Motor neuron (in vitro differentiated cells): ENCODE measurements at regions of chr6 and their contacts with region 1.

Region 1: GRCh38 chr6:165884813-165885765 is 222.0 kb upstream of the PDE10A start:
- ATAC-seq: peak; percentile 91 to 100 (median 95)
- H3K4me3 ChIP-seq: no peak overlapping the region
- H3K27ac ChIP-seq: no peak overlapping the region
- H3K4me1 ChIP-seq: peaks cover 0 to 2% of the 10 kb centered on the region in 2 donors

Region 2: DNA sequence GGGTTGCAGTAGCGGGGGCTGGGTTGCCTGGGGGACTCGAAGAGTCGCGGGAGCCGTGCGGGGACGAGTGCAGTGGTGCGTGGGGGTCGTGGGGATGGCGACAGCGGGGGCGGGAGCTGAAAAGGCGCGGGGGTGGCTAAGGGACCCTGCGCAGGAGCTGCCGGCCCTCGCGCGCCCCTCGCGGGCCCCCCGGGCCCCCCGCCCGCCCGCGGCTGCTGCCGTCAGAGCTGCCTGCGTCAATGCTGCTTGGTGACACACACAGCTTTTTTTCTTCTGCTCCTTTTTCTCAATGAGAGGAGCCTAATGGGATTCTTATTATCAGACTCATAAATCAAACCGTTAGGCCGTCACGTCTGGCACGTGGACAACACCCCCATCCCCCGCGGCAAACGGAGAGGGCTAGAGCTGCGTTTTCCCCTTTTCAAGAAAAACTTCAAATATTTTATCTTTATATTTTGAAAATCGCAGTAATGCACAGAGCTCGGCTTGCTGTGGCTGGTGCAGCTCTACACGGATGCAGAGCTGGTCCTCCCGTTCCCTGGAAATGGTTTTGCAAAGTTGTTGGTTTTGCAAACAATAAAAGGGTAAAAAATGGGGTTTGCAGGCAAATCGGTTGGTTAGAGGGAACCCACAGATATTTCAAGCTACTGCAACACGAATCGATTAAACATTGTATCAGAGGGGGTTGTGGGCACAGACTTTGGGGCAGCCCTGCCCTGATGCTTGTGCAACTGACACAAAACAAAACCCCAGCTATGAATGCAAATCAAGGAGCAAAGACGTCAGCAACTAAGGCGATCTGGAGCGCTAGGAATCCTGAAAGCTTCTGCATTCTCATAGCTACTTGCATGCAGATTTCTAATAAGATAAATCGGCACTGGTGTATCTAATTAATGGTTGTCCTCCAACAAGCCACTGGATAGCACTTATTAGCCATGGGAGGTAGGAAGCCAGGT is 121.1 kb after region 1 on chr6:
- in situ Hi-C with region 1: no loop called
- ATAC-seq: peak in 7 of 8 experiments; percentile 56 to 71 (median 66)
- H3K4me3 ChIP-seq: peak overlapping the region; percentile 28 to 36 (median 31)
- H3K27ac ChIP-seq: peak overlapping the region; percentile 55 to 83
- H3K4me1 ChIP-seq: peaks cover 21 to 39% of the 10 kb centered on the region in 2 donors

Region 3: GRCh38 chr6:166097915-166098522 is 212.9 kb after region 1 on chr6:
- in situ Hi-C with region 1: loop called (anchors 10 kb)
- ATAC-seq: peak; percentile 51 to 100 (median 94)
- H3K4me3 ChIP-seq: peak overlapping the region in 4 of 5 donors; percentile 11 to 40 (median 24)
- H3K27ac ChIP-seq: no peak overlapping the region
- H3K4me1 ChIP-seq: no peaks in the 10 kb centered on the region

Region 4: GRCh38 chr6:166106076-166106686 is 221.1 kb after region 1 on chr6:
- in situ Hi-C with region 1: loop called in 6 of 9 experiments (anchors 10 kb)
- ATAC-seq: peak; percentile 72 to 92 (median 82)
- H3K4me3 ChIP-seq: no peak overlapping the region
- H3K27ac ChIP-seq: no peak overlapping the region
- H3K4me1 ChIP-seq: no peaks in the 10 kb centered on the region

Region 5: DNA sequence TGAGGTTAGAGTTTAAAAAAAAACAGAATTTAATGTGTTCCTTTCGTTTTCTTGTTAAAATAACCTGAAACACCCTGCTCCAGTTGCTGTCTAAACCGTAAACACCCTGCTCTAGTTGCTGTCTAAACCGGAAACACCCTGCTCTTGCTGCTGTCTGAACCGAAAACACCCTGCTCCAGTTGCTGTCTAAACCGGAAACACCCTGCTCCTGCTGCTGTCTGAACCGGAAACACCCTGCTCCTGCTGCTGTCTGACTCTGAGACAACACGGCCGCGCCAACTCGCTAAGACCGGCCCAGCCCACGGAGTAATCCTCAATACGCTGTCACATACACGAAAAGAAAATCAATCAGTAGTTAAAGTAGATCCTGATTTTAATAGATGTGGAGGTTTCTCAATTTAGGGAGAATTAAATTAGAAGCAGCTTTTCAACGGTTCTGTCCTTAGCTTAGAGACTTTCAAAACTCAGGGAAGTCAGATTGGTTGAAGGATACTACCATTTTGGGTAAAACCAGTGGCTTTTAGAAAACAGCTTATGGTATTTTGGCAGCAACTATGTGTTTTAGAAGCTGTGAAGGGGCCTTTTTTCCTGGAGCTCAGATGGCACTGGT is 603.1 kb after region 1 on chr6:
- in situ Hi-C with region 1: no loop called
- ATAC-seq: peak in 3 of 8 experiments; percentile 27 to 95 (median 94)
- H3K4me3 ChIP-seq: no peak overlapping the region
- H3K27ac ChIP-seq: no peak overlapping the region
- H3K4me1 ChIP-seq: peaks cover 21 to 27% of the 10 kb centered on the region in 2 donors